ENCODE measurements at regions of chr12 and their contacts with region 1.

Region 1: DNA sequence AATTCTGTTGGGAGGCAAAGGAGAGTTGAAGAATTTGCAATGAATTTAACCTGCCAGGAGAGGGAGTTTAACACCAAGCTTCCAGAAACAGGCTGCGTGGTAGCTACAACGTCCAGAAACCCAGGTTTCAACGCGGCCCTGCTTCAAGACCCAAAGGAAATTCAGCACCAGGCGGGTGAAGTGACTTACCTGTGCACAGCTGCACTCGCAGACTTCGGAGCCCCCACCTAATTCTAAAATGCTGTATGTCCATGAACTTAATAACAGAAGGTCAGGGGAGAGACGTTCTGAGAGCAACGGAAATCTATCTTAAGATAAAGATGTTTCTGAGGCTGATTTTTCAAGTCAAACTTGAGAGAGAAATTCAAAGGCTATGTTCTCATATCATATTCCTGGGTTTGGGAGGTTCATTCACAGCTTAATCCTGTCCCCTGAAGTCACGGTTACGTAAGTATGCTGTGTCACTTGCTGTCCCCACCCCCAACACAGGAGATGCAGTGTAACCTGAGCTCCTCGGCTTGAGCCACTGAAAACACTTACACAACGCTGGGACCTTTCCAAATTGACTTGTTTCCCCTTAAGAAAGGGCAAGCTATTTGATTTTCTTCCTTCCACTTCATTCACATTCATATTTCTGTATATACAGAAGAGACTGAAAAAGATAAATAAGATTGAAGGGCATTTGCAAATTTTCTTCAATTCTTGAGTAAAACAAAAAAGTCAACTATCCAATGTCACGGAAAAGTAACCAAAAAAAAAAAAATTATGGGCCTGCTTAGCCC is 22.7 kb downstream of the CLIP1 start:
- DNase-seq: peak; percentile 93 to 94
- H3K4me3 ChIP-seq: peak overlapping the region in 1 of 3 donors; percentile 18
- H3K27ac ChIP-seq: peak overlapping the region; percentile 79 to 99 (median 98)
- H3K4me1 ChIP-seq: peaks cover 25 to 47% of the 10 kb centered on the region in 2 donors
- H3K27me3 ChIP-seq: no peaks in the 10 kb centered on the region
- CTCF ChIP-seq: peak; percentile 30 to 93 (median 67)
- POLR2A ChIP-seq: peak in 1 of 2 donors; percentile 19

Region 2: GRCh38 chr12:122318607-122319605 is 80.9 kb before region 1 on chr12:
- intact Hi-C with region 1: no loop called
- DNase-seq: no peak
- H3K4me3 ChIP-seq: no peak overlapping the region
- H3K27ac ChIP-seq: peak overlapping the region in 2 of 3 donors; percentile 5 to 58
- H3K4me1 ChIP-seq: peaks cover 0 to 16% of the 10 kb centered on the region in 2 donors
- H3K27me3 ChIP-seq: no peaks in the 10 kb centered on the region
- CTCF ChIP-seq: no peak
- POLR2A ChIP-seq: no peak

Region 3: DNA sequence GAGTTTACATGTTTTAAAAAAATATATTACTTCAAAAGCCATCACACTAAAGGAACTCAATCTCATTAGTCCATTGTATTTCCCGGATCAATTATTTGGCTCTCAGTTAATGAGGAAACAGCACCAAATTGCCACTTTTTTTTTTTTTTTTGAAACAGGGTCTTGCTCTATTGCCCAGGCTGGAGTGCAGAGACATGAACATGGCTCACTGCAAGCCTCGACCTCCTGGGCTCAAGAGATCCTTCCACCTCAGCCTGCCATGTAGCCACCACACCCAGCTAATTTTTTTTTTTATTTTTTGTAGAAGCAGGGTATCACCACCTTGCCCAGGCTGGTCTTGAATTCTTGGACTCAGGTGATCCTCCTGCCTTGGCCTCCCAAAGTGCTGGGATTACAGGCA is 54.7 kb before region 1 on chr12:
- intact Hi-C with region 1: no loop called
- DNase-seq: no peak
- H3K4me3 ChIP-seq: no peak overlapping the region
- H3K27ac ChIP-seq: no peak overlapping the region
- H3K4me1 ChIP-seq: peaks cover 2 to 3% of the 10 kb centered on the region in 2 donors
- H3K27me3 ChIP-seq: no peaks in the 10 kb centered on the region
- CTCF ChIP-seq: no peak
- POLR2A ChIP-seq: no peak

Region 4: DNA sequence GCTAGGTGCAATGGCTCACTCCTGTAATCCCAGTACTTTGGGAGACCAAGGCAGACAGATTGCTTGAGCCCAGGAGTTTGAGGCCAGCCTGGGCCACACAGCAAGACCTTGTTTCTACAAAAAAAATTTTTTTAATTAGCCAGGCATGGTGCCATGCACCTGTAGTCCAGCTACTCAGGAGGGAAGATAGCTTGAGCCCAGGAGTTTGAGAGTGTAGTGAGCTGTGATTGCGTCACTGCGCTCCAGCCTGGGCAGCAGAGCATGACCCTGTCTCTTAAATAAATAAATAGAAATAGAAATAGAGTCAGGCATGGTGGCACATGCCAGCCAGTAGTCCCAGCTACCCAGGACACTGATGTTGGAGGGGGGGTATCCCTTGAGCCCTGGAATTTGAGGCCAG is 59.4 kb after region 1 on chr12:
- intact Hi-C with region 1: loop called (anchors 5 kb)
- DNase-seq: peak; percentile 93 to 94
- H3K4me3 ChIP-seq: no peak overlapping the region
- H3K27ac ChIP-seq: peak overlapping the region; percentile 80 to 87 (median 84)
- H3K4me1 ChIP-seq: peaks cover 18 to 21% of the 10 kb centered on the region in 2 donors
- H3K27me3 ChIP-seq: no peaks in the 10 kb centered on the region
- CTCF ChIP-seq: no peak
- POLR2A ChIP-seq: no peak

Region 5: DNA sequence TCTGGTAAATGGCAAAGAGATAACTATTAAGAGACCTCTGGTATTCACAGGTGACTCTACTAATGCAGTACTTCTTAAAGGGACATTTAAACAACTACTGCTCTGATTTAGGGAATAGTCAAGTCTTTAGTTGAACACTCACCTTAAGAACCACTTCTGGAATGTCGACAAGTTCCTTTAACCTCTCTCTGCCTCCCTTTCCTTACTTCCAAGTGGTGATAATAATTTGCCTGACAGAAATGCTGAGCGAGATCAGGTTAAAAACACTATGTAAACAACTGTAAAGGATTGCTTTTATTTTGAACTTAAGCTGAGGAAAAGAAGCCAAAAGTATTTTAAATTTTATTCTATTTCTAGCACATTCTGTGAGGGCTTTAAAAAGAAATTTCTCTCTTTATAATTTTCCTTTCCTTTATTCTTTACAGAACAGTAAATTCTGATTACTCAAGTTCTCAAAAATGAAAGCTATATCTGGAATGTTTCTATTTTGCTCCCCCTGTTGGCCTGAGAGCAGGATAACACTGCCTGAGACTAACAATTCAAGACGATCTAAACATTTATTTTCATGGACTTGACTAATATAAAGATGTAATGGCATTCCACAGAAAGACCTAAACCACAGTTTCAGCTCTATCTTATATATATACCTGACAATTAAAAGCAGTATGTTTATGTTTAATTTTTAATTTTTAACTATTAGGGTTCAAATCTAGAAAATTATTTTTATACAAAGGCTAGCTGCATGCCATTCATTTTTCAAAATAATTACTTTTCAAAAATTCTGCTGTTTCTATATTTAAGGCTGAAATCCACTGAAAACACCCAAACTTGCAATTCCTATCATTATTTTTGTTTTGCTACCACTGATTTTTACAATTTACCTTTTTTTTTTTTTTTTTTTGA is 71.8 kb after region 1 on chr12:
- intact Hi-C with region 1: loop called (anchors 5 kb)
- DNase-seq: no peak
- H3K4me3 ChIP-seq: no peak overlapping the region
- H3K27ac ChIP-seq: peak overlapping the region; percentile 76 to 80 (median 78)
- H3K4me1 ChIP-seq: peaks cover 6 to 10% of the 10 kb centered on the region in 2 donors
- H3K27me3 ChIP-seq: no peaks in the 10 kb centered on the region
- CTCF ChIP-seq: peak; percentile 45 to 90 (median 82)
- POLR2A ChIP-seq: no peak

Measured in thyroid gland (tissue), 4 donors.